SK-N-SH (cell line): ENCODE measurements at regions of chr5 and their contacts with region 1.

Region 1: DNA sequence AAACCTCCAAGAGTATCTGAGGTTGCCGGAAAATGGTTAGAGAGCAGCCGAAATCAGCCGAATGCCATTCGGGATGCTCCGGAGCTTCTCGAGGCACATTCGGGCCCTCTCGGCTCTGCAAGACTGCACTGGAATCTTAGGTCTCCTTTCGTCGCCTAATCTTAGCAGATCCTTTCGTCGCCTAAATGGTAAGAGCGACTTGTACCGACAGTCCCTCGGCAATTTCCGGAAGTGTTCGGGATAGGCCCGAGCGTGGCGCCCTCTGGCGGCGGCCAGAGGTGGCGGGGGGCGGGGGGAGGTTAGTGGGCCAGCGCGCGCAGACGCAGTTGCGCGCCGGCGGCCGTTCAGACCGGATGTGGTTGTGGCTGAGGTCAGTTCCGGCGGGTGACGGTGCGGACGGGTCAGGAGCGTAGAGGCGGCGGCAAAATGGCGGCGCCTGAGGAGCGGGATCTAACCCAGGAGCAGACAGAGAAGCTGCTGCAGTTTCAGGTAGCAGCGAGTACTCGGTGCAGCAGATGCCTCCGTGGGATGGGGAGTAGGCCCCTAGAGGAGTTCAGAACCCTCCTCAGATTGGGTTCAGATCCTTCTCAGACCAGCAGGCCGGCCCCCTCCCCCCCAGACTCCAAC is at the start of gene FAF2:
- DNase-seq: peak; percentile 99
- H3K4me3 ChIP-seq: peak within 1 kb of the TSS; percentile 88 to 93
- H3K27ac ChIP-seq: peak within 1 kb of the TSS; percentile 91 to 93
- H3K4me1 ChIP-seq: peaks cover 0 to 3% of the 10 kb centered on the region in 2 experiments; a peak in 2 of 4 replicates
- H3K27me3 ChIP-seq: no peaks in the 10 kb centered on the region
- CTCF ChIP-seq: peak; percentile 99
- EP300 ChIP-seq: no peak
- RAD21 ChIP-seq: no peak
- polyA plus RNA-seq, gene FAF2: 25.5 and 35.1 TPM in 2 replicates

Region 2: DNA sequence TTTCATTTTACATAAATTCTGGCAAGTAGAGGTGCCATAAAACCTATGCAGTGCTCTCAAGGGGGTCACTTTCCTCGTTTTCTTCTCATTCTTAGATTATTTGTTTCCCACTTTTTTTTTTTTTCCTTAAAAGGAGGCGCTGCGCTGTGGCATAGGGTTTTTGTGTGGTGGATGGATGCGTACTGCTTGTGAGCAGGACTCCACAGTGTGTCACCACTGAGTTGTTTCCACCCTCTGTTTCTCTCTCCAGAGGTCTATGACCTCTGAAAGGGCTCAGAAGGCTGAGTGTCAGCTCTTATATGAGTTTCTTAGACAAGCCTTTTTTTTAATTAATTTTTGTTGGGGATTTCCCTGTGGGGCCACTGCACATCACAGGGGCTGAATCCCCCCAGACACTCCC is 18.1 kb before region 1 on chr5:
- CTCF ChIA-PET with region 1: interaction called, 15 read pairs
- POLR2A ChIA-PET with region 1: no interaction called
- DNase-seq: no peak
- H3K4me3 ChIP-seq: no peak overlapping the region
- H3K27ac ChIP-seq: no peak overlapping the region
- H3K4me1 ChIP-seq: no peaks in the 10 kb centered on the region
- H3K27me3 ChIP-seq: no peaks in the 10 kb centered on the region; the same call in 1 of the 2 replicates
- CTCF ChIP-seq: no peak
- EP300 ChIP-seq: no peak
- RAD21 ChIP-seq: no peak

Region 3: GRCh38 chr5:176474510-176474909 is 26.4 kb after region 1 on chr5:
- CTCF ChIA-PET with region 1: interaction called, 19 read pairs
- POLR2A ChIA-PET with region 1: no interaction called
- DNase-seq: peak; percentile 20
- H3K4me3 ChIP-seq: no peak overlapping the region
- H3K27ac ChIP-seq: peak overlapping the region; percentile 45 to 72; a peak in 3 of 4 replicates
- H3K4me1 ChIP-seq: 0 out of 4 replicates have a peak, but pooled peaks cover 0 to 7% of the 10 kb centered on the region in 2 experiments
- H3K27me3 ChIP-seq: no peaks in the 10 kb centered on the region
- CTCF ChIP-seq: no peak
- EP300 ChIP-seq: no peak
- RAD21 ChIP-seq: no peak

Region 4: GRCh38 chr5:176530983-176531821 is 83.1 kb after region 1 on chr5:
- CTCF ChIA-PET with region 1: interaction called, 12 read pairs
- POLR2A ChIA-PET with region 1: interaction called, 3 read pairs
- DNase-seq: peak; percentile 85
- H3K4me3 ChIP-seq: no peak overlapping the region
- H3K27ac ChIP-seq: peak overlapping the region in 1 of 2 experiments; percentile 79; a peak in 2 of 4 replicates
- H3K4me1 ChIP-seq: peaks cover 13 to 52% of the 10 kb centered on the region in 2 experiments; a peak in 3 of 4 replicates
- H3K27me3 ChIP-seq: no peaks in the 10 kb centered on the region
- CTCF ChIP-seq: no peak
- EP300 ChIP-seq: peak in 1 of 2 experiments; percentile 16; a peak in 1 of 4 replicates
- RAD21 ChIP-seq: no peak

Region 5: GRCh38 chr5:176537608-176538504 is 89.8 kb after region 1 on chr5:
- CTCF ChIA-PET with region 1: interaction called, 12 read pairs
- POLR2A ChIA-PET with region 1: interaction called, 4 read pairs
- DNase-seq: peak; percentile 90
- H3K4me3 ChIP-seq: peak overlapping the region; percentile 73 to 97
- H3K27ac ChIP-seq: peak overlapping the region; percentile 87 to 96
- H3K4me1 ChIP-seq: peaks cover 19 to 49% of the 10 kb centered on the region in 2 experiments; a peak in 3 of 4 replicates
- H3K27me3 ChIP-seq: no peaks in the 10 kb centered on the region
- CTCF ChIP-seq: no peak
- EP300 ChIP-seq: no peak
- RAD21 ChIP-seq: no peak

Region 6: DNA sequence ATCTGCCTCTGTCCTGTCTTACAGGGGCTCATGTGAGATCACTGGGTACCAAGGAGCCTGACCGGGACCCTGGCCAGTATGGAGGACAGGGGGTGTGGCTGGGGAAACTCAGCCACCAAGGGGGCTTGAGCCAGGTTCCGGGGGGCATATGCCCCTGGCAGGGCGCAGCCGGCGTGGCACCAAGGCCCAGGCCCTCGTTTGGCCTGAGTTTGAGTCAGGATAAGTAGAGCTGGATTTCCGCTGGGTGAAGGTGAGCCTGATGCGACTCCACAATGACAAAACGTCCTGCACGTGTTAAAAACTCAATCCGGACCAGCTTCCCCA is 198.6 kb after region 1 on chr5:
- CTCF ChIA-PET with region 1: no interaction called
- POLR2A ChIA-PET with region 1: no interaction called
- DNase-seq: no peak
- H3K4me3 ChIP-seq: peak overlapping the region; percentile 21 to 34; a peak in 2 of 4 replicates
- H3K27ac ChIP-seq: peak overlapping the region; percentile 28 to 87; a peak in 3 of 4 replicates
- H3K4me1 ChIP-seq: peaks cover 4 to 36% of the 10 kb centered on the region in 2 experiments; a peak in 2 of 4 replicates
- H3K27me3 ChIP-seq: no peaks in the 10 kb centered on the region
- CTCF ChIP-seq: no peak
- EP300 ChIP-seq: no peak
- RAD21 ChIP-seq: no peak